ENCODE measurements at regions of chr17 and their contacts with region 1.

Region 1: DNA sequence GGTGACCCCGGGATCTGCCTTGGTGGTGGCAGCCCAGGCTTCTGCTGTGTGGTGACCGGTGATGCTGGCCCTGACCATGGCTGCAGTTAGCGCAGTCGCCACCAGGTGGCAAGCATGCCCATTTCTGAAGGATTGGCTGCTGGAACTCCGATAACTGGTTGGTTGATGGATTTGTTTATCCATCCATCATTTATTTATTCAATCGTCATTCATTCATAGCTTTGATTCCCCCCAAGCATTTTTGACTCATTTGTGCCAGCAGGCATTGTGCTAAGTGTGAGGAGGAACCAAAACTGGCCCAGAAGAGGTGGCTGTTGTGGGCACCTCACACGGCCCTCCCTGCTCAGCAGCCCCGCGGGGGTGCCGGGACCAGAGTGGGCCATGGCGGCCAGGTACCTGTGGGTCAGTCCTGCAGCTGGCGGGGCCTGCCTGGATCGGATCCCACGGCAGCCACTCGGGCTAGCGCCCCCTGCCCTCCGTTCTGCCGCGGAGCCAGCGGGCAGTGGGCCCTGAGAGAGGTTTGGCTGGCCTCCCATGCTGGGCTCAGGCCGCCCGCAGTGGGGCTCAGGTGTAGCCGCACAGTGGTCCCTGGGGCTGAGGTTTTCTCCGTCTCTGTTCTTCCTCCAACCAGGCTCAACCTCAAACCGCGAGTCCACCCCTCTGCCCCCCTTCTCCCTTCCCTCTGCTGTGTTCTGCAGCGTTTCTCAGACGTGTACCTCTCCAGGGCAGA is 28.8 kb upstream of the ITGA3 start:
- DNase-seq: peak; percentile 37 to 94
- H3K4me3 ChIP-seq: peak overlapping the region; percentile 44 to 62
- H3K27ac ChIP-seq: peak overlapping the region; percentile 82 to 92
- H3K4me1 ChIP-seq: peaks cover 4 to 29% of the 10 kb centered on the region in 2 donors
- H3K27me3 ChIP-seq: no peaks in the 10 kb centered on the region
- CTCF ChIP-seq: peak; percentile 90 to 98 (median 95)

Region 2: DNA sequence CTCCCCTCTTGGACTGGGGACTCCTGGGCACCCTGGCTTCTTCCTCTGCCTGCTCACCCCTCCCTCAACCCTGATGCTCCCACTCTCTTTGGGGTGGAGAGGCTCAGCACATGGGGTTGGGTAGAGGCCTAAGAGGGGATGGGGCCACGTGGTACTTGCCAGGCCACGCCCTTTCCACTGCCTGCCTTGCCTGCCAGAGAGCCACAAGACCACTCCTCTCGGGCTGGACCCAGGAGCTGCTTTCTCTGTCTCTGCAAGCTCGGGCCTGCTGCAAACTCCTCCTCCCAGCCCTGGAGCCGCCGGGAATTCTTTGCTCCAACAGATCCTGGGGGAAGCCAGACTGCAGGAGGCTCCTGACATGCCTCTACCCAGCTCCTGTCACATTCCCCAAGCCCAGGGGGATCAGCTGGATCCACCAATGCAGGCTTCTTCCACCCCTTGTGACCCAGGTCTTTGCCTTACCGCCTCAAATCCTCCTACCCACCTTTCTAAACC is 46.3 kb before region 1 on chr17:
- intact Hi-C with region 1: no loop called
- DNase-seq: no peak
- H3K4me3 ChIP-seq: no peak overlapping the region
- H3K27ac ChIP-seq: no peak overlapping the region
- H3K4me1 ChIP-seq: no peaks in the 10 kb centered on the region
- H3K27me3 ChIP-seq: no peaks in the 10 kb centered on the region
- CTCF ChIP-seq: no peak

Region 3: GRCh38 chr17:50015146-50015545 is 11.9 kb before region 1 on chr17:
- intact Hi-C with region 1: no loop called
- DNase-seq: no peak
- H3K4me3 ChIP-seq: no peak overlapping the region
- H3K27ac ChIP-seq: no peak overlapping the region
- H3K4me1 ChIP-seq: no peaks in the 10 kb centered on the region
- H3K27me3 ChIP-seq: no peaks in the 10 kb centered on the region
- CTCF ChIP-seq: no peak

Region 4: GRCh38 chr17:50055426-50056230 is 28.6 kb after region 1 on chr17 and contains the start of gene ITGA3:
- intact Hi-C with region 1: loop called (anchors 1 kb)
- DNase-seq: peak in 1 of 2 donors; percentile 93
- H3K4me3 ChIP-seq: peak within 1 kb of the TSS; percentile 73 to 83
- H3K27ac ChIP-seq: peak within 1 kb of the TSS; percentile 95 to 97
- H3K4me1 ChIP-seq: peaks cover 32 to 47% of the 10 kb centered on the region in 2 donors
- H3K27me3 ChIP-seq: no peaks in the 10 kb centered on the region
- CTCF ChIP-seq: peak in 1 of 3 experiments; percentile 29
- total RNA-seq, gene ITGA3: 222 TPM

Region 5: DNA sequence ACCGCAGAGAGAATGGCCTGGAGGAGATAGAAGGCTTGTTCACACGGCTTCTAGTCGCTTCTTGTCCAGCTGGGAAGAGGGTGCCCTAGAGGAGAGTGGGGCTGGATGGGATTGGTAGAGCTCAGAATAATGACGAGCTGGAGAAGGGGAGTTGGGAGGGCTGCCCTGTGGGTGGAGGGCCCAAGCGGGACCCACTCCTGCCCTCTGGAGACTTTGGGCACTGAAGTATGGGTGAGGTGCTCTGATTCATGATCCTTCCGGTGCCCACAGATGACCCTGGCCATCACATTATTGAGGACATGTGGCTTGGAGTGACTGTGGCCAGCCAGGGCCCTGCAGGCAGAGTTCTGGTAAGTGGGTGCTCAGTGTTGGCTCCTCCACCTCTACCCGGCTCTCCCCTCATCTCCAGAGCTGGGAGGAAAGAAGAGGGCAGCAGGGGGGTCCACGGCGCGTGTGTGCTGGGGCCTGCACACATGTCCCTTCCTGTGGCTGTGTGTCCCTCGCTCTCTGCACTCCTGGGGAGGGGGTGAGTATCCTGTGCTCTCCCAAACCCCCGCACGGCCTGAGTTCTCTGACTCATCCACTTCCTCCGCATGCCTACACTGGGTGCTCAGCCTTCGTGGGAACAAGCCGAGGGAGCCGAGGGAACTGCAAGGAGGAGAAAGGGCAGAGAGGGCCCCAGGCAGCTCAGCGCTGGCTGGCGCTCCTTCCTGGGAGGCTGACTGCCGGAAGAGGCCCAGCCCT is 37.4 kb after region 1 on chr17:
- intact Hi-C with region 1: loop called (anchors 2 kb)
- DNase-seq: peak; percentile 72 to 94
- H3K4me3 ChIP-seq: no peak overlapping the region
- H3K27ac ChIP-seq: peak overlapping the region; percentile 95 to 97
- H3K4me1 ChIP-seq: peaks cover 42 to 69% of the 10 kb centered on the region in 2 donors
- H3K27me3 ChIP-seq: no peaks in the 10 kb centered on the region
- CTCF ChIP-seq: peak in 1 of 3 experiments; percentile 9

Region 6: DNA sequence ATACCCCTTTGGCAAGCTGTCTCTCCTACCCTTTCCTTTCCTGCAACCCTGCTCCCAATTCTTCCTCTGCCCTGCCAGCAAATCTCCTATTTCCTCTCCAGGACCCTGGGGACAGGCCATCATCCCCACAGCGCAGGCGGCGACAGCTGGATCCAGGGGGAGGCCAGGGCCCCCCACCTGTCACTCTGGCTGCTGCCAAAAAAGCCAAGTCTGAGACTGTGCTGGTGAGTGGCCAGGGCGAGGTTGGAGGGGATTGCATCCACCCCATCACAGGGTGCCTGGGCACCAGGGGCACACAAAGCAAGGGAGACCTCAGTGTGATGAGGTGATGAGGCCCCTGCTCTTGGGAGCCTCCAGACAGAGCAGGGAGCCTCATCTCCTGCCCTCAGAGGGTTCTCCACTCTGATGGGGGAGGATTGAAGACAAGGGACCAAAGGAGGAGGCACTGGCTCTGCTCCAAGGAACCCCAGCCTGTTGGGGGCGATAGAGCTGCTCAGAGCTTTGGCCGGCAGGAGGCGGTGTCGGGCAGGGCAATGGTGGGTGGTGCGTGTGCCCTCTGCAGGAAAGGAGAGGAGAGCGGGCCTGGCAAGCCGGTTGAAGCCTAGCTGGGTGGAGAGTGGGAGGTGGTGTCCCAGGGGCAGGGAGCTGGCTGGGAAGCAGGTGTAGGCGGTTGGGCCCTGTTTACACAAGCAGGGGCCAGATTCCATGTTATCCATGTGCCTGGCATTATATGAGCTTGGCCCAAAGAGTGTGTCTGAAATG is 52.4 kb after region 1 on chr17:
- intact Hi-C with region 1: loop called (anchors 2 kb)
- DNase-seq: no peak
- H3K4me3 ChIP-seq: no peak overlapping the region
- H3K27ac ChIP-seq: peak overlapping the region; percentile 60 to 68
- H3K4me1 ChIP-seq: peaks cover 0 to 7% of the 10 kb centered on the region in 2 donors
- H3K27me3 ChIP-seq: no peaks in the 10 kb centered on the region
- CTCF ChIP-seq: peak; percentile 68 to 84 (median 82)

Region 7: GRCh38 chr17:50087246-50087911 is 60.3 kb after region 1 on chr17:
- intact Hi-C with region 1: loop called (anchors 1 kb)
- DNase-seq: peak in 1 of 2 donors; percentile 86
- H3K4me3 ChIP-seq: no peak overlapping the region
- H3K27ac ChIP-seq: peak overlapping the region; percentile 34 to 48
- H3K4me1 ChIP-seq: no peaks in the 10 kb centered on the region
- H3K27me3 ChIP-seq: no peaks in the 10 kb centered on the region
- CTCF ChIP-seq: peak; percentile 91 to 96 (median 93)

Region 8: GRCh38 chr17:50285941-50286340 is 258.9 kb after region 1 on chr17:
- intact Hi-C with region 1: no loop called
- DNase-seq: no peak
- H3K4me3 ChIP-seq: no peak overlapping the region
- H3K27ac ChIP-seq: no peak overlapping the region
- H3K4me1 ChIP-seq: peaks cover 12 to 32% of the 10 kb centered on the region in 2 donors
- H3K27me3 ChIP-seq: no peaks in the 10 kb centered on the region
- CTCF ChIP-seq: no peak

Region 9: DNA sequence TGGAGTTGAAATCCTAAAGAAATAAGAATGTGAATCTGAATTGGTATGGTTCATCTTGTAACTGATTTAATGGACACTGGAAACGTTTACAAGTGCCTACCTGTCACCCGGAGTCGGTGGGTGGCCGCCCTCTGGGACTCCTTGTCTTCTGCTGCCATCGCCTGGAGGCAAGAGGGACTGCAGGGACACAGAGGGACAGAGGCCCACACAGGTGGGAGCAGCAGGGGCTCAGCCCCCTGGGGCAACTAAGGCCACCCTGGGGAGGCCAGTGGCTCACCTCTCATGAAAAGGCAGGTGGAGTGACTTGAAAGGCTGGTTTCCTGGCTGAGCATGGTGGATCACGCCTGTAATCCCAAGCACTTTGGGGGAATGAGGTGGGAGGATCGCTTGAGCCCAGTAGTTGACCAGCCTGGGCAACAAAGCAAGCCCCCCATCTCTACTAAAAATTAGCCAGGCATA is 270.4 kb after region 1 on chr17:
- intact Hi-C with region 1: loop called (anchors 5 kb)
- DNase-seq: peak; percentile 43 to 85
- H3K4me3 ChIP-seq: no peak overlapping the region
- H3K27ac ChIP-seq: no peak overlapping the region
- H3K4me1 ChIP-seq: no peaks in the 10 kb centered on the region
- H3K27me3 ChIP-seq: no peaks in the 10 kb centered on the region
- CTCF ChIP-seq: peak; percentile 98 to 99 (median 98)

Measured in ascending aorta (tissue), 2 donors.